Motor neuron (in vitro differentiated cells): ENCODE measurements at regions of chr4 and their contacts with region 1.

Region 1: DNA sequence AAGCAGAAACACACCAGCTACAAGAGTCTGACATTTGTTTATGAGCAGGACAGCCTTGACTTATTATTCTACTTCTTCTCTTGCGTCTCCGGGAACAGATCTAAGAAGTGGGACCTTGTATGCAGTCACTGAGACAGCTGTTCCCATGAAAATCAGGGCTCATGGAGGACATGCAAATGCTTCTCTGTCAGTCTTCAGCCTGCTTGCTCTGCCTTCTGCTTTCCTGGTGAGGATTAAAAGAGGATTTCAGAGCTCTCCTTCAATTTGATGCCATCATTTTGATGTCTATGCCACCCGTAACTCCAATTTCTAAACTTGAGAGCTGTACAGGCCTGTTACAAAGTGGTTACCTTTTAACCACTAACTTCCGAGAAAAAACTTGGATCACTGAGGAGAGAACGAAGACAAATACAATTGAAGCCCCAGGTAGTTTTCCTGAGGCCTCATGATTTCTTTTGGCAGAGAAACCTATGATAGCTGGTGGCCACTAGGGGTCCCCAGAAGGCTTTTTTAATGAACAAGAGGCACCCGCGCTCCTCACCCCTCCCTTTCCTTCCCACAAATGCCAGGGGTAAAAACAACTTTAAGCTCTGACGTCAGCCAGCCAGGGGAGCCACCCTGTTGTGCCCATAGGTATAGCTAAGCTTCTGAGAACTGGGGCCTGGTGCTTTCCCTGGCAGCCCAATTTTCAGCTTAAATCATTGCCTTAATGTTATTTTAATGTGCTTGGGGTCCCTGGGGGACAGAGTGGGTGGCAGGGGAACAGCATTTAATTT is 97.0 kb downstream of the DDIT4L start:
- ATAC-seq: peak; percentile 76 to 98 (median 84)
- H3K4me3 ChIP-seq: no peak overlapping the region
- H3K27ac ChIP-seq: no peak overlapping the region
- H3K4me1 ChIP-seq: peaks cover 5 to 7% of the 10 kb centered on the region in 2 donors

Region 2: DNA sequence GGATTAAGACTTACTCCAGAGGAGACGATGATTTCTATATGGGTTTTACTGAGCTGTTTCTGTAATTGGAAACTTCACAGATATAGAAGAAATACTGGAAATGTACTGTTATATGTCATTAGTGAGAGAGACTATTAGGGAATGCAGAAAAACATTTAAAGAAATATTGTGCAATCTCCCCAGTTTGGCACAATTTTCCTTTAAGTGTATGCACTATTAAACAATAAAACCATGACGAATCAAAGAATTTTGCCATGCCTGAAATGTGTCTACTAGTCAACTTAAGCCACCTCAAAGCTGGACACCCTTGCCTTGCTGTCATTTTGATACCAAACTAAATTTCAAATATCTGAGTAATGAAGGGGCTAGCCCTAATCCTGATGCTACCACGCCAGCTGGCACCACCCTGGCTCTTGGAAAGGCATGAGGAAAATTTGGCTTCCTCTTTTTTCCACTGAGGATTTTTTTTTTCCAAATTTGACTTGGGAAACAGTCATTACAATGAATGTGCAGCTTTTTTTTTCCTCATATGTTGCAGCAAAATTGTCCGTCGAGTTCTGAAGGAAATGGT is 482.6 kb before region 1 on chr4:
- in situ Hi-C with region 1: no loop called
- ATAC-seq: no peak
- H3K4me3 ChIP-seq: no peak overlapping the region
- H3K27ac ChIP-seq: no peak overlapping the region
- H3K4me1 ChIP-seq: no peaks in the 10 kb centered on the region

Region 3: DNA sequence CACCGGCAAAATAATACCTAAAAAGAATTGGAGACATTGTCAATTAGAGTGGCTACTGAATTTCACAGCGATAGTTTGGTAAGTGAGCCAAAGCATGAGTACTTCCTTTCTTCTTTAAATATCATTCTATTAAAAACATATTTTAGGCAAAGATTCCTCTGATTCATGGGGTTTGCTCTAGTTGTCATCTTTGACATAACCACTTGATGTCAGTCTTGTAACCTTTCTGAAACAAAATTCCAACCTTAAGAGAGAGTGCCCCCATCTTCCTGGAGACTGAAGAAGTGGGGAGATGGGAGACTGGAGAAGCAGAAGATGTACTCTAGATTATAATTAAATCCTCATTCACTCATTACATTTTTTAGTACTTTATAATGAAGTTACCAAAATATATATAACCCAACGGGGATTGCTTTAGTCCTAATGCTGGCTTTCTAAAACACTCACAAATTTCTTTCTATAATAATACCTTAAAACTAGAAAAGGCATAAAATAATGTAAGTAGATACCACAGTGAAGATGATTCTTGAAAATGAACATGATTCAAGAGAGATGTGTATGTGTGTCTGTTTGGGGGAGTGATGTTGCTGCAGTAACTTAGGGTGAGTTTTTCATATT is 328.2 kb after region 1 on chr4:
- in situ Hi-C with region 1: loop called in 1 of 9 experiments (anchors 25 kb)
- ATAC-seq: peak in 4 of 8 experiments; percentile 25 to 76 (median 72)
- H3K4me3 ChIP-seq: no peak overlapping the region
- H3K27ac ChIP-seq: no peak overlapping the region
- H3K4me1 ChIP-seq: no peaks in the 10 kb centered on the region